ENCODE measurements at regions of chr5 and their contacts with region 1.

Region 1: DNA sequence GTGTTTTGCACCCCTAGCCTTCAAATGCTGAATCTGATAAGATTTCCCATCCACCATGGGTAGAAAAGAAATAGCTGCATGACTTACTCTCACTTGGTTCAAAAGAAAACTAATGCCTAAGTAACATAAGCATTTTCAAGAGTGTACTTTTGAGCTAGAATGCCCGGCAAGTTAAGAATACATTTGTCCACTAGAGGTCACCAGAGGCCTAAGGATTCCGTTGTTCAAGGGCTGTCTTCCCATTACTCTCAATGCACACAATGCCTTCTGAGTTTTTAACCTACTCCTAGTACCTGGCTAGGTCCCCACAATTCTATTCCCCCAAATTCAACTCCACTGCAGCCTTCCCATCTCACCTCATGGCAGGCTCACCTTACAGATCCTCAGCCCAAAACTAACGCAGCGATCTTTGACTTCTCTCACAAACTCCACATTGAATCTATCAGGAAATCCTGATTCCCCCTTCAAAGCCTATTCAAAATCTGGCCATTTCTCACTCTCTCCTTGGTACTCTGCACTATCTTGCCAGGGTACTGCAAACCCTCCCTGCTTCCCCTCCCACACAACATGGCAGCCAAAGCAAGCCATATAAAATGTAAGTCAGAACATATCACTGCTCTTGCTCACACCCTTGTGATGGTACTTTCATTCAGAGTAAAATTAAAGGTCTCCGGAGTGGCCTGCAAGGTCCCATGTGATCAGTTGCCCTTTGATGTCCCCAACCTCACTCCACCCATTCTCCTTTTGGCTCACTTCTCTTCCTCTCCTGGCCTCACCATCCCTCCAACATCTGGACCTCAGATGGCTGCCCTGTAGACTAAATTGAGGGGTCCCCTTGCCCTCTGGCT is 13.4 kb downstream of the OXCT1 start:
- DNase-seq: peak; percentile 58
- ATAC-seq: peak; percentile 96
- H3K4me3 ChIP-seq: no peak overlapping the region
- H3K27ac ChIP-seq: no peak overlapping the region
- H3K4me1 ChIP-seq: no peaks in the 10 kb centered on the region
- H3K27me3 ChIP-seq: no peaks in the 10 kb centered on the region
- CTCF ChIP-seq: peak; percentile 85
- EP300 ChIP-seq: no peak
- POLR2A ChIP-seq: no peak
- RAD21 ChIP-seq: peak; percentile 68

Region 2: DNA sequence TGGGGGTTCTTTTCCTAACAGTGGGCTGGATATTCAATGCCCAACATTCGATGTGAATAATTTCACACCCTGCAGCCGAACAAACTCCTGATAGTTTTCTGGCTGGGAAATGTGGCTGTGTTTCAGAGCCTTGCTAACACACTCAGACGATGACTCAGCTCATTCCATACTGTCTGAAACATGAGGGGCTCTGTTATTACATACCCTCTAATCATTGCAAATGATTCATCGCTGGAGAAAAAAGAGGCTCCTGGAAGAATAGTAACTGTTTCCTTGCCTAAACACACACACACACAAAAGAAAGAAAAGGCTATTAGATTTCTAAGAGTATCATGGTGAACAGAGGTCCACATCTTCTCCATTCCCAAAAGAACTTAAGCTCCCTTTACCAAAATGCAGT is 62.4 kb before region 1 on chr5:
- CTCF ChIA-PET with region 1: no interaction called
- POLR2A ChIA-PET with region 1: no interaction called
- in situ Hi-C with region 1: no loop called
- intact Hi-C with region 1: no loop called
- DNase-seq: peak; percentile 3
- ATAC-seq: no peak
- H3K4me3 ChIP-seq: no peak overlapping the region
- H3K27ac ChIP-seq: no peak overlapping the region
- H3K4me1 ChIP-seq: no peaks in the 10 kb centered on the region
- H3K27me3 ChIP-seq: no peaks in the 10 kb centered on the region
- CTCF ChIP-seq: no peak
- EP300 ChIP-seq: no peak
- POLR2A ChIP-seq: no peak
- RAD21 ChIP-seq: no peak

Region 3: DNA sequence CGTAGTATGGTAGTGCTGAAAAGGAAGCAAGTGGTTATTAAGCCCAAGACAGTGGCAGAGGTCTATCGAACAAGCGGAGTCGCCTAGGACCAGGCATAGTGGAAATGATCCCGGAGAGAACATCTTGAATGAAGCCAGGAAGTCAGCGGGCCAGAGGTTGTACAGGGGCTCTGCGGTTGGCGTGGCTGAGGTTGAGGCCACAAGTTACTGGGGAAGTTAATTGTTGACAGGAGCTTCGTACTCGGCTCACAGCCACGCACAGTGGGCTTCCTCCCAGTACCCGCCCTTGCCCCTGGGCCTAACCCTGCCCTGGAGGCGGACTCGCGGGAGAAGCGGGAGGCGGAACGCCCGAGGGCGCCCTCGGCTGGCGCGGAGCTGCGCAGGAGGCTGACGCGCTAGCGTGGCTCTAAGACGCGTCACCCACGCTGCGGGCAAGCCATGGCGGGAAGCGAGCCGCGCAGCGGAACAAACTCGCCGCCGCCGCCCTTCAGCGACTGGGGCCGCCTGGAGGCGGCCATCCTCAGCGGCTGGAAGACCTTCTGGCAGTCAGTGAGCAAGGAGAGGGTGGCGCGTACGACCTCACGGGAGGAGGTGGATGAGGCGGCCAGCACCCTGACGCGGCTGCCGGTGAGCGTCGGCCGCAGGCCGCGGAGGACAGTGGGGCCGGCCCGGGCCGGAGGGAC is 68.1 kb after region 1 on chr5 and contains the start of gene FBXO4:
- CTCF ChIA-PET with region 1: interaction called, 3 read pairs
- POLR2A ChIA-PET with region 1: no interaction called
- in situ Hi-C with region 1: no loop called
- intact Hi-C with region 1: loop called (anchors 5 kb)
- DNase-seq: peak; percentile 71
- ATAC-seq: peak; percentile 98
- H3K4me3 ChIP-seq: peak within 1 kb of the TSS; percentile 67 to 91 (median 82)
- H3K27ac ChIP-seq: peak within 1 kb of the TSS; percentile 79
- H3K4me1 ChIP-seq: peaks cover 50% of the 10 kb centered on the region
- H3K27me3 ChIP-seq: no peaks in the 10 kb centered on the region; a peak in 1 of 5 replicates
- CTCF ChIP-seq: peak; percentile 93
- EP300 ChIP-seq: peak; percentile 32 to 49; a peak in 2 of 4 replicates
- POLR2A ChIP-seq: peak; percentile 77 to 82
- RAD21 ChIP-seq: peak; percentile 63
- total RNA-seq, gene FBXO4: 16.4 and 19.1 TPM in 2 replicates

Region 4: DNA sequence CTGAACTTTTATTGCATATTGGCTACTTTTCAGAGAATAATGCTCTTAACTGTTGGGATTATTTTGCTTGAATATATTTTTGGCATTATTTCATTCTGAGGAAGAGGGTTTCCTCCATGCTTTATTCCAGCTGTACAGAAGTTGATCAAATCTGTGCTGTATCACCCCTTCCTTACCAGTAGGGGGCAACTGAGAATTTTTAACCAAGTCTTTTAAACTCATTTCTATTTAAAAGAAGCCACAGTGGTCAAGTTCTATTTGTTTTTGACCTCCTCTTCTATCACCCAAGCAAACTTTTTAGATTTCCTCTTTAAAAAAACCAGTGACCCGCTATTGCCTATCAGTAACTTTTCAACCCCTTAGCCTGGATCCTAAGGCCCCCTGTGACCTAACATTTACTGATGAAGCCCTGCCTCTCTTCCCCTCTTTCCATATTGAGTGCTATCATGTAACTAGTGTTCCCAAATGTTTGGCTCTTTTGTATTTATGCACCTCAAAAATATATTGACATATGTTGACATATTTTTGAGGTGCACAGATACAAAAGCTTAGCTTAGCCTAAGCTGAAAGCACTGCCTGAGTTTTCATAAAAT is 148.8 kb after region 1 on chr5:
- CTCF ChIA-PET with region 1: no interaction called
- POLR2A ChIA-PET with region 1: no interaction called
- in situ Hi-C with region 1: no loop called
- intact Hi-C with region 1: loop called (anchors 2 kb)
- DNase-seq: peak; percentile 6
- ATAC-seq: peak; percentile 57
- H3K4me3 ChIP-seq: no peak overlapping the region
- H3K27ac ChIP-seq: no peak overlapping the region
- H3K4me1 ChIP-seq: no peaks in the 10 kb centered on the region
- H3K27me3 ChIP-seq: no peaks in the 10 kb centered on the region
- CTCF ChIP-seq: peak; percentile 52
- EP300 ChIP-seq: no peak
- POLR2A ChIP-seq: no peak
- RAD21 ChIP-seq: no peak

Region 5: GRCh38 chr5:42057254-42057690 is 200.4 kb after region 1 on chr5:
- CTCF ChIA-PET with region 1: interaction called, 46 read pairs
- POLR2A ChIA-PET with region 1: no interaction called
- in situ Hi-C with region 1: loop called (anchors 5 kb)
- intact Hi-C with region 1: loop called (anchors 1 kb)
- DNase-seq: peak; percentile 28
- ATAC-seq: peak; percentile 93
- H3K4me3 ChIP-seq: no peak overlapping the region
- H3K27ac ChIP-seq: no peak overlapping the region
- H3K4me1 ChIP-seq: no peaks in the 10 kb centered on the region
- H3K27me3 ChIP-seq: no peaks in the 10 kb centered on the region
- CTCF ChIP-seq: peak; percentile 81
- EP300 ChIP-seq: no peak
- POLR2A ChIP-seq: no peak
- RAD21 ChIP-seq: peak; percentile 61; the same call in 1 of the 2 replicates